Heart right ventricle (tissue), 16 donors: ENCODE measurements at regions of chr2 and their contacts with region 1.

Region 1: GRCh38 chr2:124763611-124764010 is 738.5 kb downstream of the CNTNAP5 start:
- DNase-seq: no peak
- ATAC-seq: no peak
- H3K4me3 ChIP-seq: no peak overlapping the region
- H3K27ac ChIP-seq: no peak overlapping the region
- H3K4me1 ChIP-seq: no peaks in the 10 kb centered on the region
- H3K27me3 ChIP-seq: no peaks in the 10 kb centered on the region
- CTCF ChIP-seq: no peak

Region 2: GRCh38 chr2:124933883-124934282 is 170.3 kb after region 1 on chr2:
- intact Hi-C with region 1: loop called in 1 of 10 experiments (anchors 5 kb)
- DNase-seq: no peak
- ATAC-seq: no peak
- H3K4me3 ChIP-seq: no peak overlapping the region
- H3K27ac ChIP-seq: no peak overlapping the region
- H3K4me1 ChIP-seq: no peaks in the 10 kb centered on the region
- H3K27me3 ChIP-seq: no peaks in the 10 kb centered on the region
- CTCF ChIP-seq: no peak